ENCODE measurements at regions of chr19 and their contacts with region 1.

Region 1: DNA sequence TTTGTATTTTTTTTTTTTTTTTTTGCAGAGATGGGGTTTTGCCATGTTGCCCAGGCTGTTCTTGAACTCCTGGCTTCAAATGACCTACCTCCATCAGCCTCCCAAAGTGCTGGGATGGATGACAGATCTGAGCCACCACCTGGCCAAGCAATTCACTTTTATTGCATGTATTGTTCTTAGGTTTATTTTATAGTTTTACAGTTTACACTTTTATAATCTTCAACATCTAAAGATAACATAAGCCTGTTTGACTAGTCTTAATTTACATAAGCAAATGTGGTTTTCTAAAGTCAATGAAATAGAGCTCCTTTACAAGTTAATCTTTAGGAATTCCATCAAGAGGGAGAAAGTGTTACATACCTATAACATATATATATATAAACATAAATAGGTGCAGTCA is 9.5 kb upstream of the MPV17L2 start:
- DNase-seq: no peak
- H3K4me3 ChIP-seq: no peak overlapping the region
- CTCF ChIP-seq: no peak

Region 2: GRCh38 chr19:18167975-18168645 is 15.4 kb before region 1 on chr19:
- CTCF ChIA-PET with region 1: interaction called, 17 read pairs
- POLR2A ChIA-PET with region 1: no interaction called
- DNase-seq: no peak
- H3K4me3 ChIP-seq: no peak overlapping the region
- CTCF ChIP-seq: peak; percentile 72